GM10248 (cell line): ENCODE measurements at regions of chr6 and their contacts with region 1.

Region 1: GRCh38 chr6:42260972-42261371 is 43.3 kb upstream of the MRPS10 start:
- DNase-seq: peak; percentile 59
- CTCF ChIP-seq: peak; percentile 68

Region 2: GRCh38 chr6:42243046-42243445 is 17.9 kb before region 1 on chr6:
- CTCF ChIA-PET with region 1: interaction called, 11 read pairs
- POLR2A ChIA-PET with region 1: no interaction called
- DNase-seq: no peak
- CTCF ChIP-seq: no peak

Region 3: GRCh38 chr6:42537536-42537935 is 276.6 kb after region 1 on chr6:
- CTCF ChIA-PET with region 1: interaction called, 11 read pairs
- POLR2A ChIA-PET with region 1: no interaction called
- DNase-seq: no peak
- CTCF ChIP-seq: no peak